GM18951 (cell line): ENCODE measurements at regions of chr19 and their contacts with region 1.

Region 1: GRCh38 chr19:9934132-9934950 is 2.0 kb downstream of the OLFM2 start:
- POLR2A ChIP-seq: no peak

Region 2: GRCh38 chr19:10027158-10027693 is 92.9 kb after region 1 on chr19:
- in situ Hi-C with region 1: loop called (anchors 5 kb)
- POLR2A ChIP-seq: no peak

Region 3: GRCh38 chr19:10380313-10381102 is 446.2 kb after region 1 on chr19 and contains the start of gene TYK2:
- in situ Hi-C with region 1: loop called (anchors 25 kb)
- POLR2A ChIP-seq: peak; percentile 88